ENCODE measurements at regions of chr14 and their contacts with region 1.

Region 1: GRCh38 chr14:61308198-61308597 is 13.2 kb upstream of the PRKCH start:
- DNase-seq: no peak
- H3K4me3 ChIP-seq: no peak overlapping the region
- H3K27ac ChIP-seq: no peak overlapping the region
- H3K4me1 ChIP-seq: no peaks in the 10 kb centered on the region
- H3K27me3 ChIP-seq: peaks cover 2% of the 10 kb centered on the region; the same call in 1 of the 2 replicates

Region 2: GRCh38 chr14:61598980-61599379 is 290.8 kb after region 1 on chr14:
- in situ Hi-C with region 1: no loop called
- DNase-seq: no peak
- H3K4me3 ChIP-seq: no peak overlapping the region
- H3K27ac ChIP-seq: no peak overlapping the region
- H3K4me1 ChIP-seq: peaks cover 43% of the 10 kb centered on the region
- H3K27me3 ChIP-seq: no peaks in the 10 kb centered on the region

Region 3: DNA sequence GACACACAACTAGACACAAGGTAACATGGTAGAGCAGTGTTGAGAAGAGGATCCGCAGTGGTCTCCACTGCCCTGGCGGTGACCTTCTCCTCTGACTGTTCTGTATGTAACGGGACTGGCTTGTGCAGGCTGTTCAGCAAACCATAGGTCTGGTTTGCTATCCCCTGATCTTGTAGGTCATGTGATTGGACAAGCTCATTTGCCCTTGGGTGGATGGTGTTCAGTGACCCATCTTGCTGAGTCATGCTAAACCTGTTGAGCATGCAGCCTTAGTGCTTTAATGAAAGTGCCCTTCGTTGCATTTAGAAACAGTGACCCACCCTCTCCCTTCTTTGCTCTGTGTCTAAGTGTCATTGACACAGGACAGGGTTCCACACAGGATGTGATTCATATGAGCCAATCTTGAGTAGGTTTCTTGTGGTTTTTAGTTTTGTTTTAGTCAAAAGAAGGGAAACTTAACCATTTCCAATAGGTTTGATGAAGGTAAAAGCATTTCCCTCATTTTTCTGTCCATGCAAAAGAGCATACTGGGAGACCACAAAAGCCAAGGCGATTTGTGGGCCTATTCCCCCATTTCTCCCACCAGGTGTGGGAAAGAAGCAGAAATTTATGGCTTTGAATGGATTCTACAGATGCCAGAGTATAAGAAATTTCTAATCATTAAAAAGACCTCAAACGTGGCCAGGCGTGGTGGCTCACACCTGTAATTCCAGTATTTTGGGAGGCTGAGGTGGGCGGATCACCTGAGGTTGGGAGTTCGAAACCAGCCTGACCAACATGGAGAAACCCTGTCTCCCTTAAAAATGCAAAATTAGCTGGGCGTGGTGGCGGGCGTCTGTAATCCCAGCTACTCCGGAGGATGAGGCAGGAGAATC is 354.5 kb after region 1 on chr14:
- in situ Hi-C with region 1: no loop called
- DNase-seq: peak; percentile 77
- H3K4me3 ChIP-seq: peak overlapping the region; percentile 45
- H3K27ac ChIP-seq: peak overlapping the region; percentile 78
- H3K4me1 ChIP-seq: peaks cover 42% of the 10 kb centered on the region
- H3K27me3 ChIP-seq: no peaks in the 10 kb centered on the region

Region 4: DNA sequence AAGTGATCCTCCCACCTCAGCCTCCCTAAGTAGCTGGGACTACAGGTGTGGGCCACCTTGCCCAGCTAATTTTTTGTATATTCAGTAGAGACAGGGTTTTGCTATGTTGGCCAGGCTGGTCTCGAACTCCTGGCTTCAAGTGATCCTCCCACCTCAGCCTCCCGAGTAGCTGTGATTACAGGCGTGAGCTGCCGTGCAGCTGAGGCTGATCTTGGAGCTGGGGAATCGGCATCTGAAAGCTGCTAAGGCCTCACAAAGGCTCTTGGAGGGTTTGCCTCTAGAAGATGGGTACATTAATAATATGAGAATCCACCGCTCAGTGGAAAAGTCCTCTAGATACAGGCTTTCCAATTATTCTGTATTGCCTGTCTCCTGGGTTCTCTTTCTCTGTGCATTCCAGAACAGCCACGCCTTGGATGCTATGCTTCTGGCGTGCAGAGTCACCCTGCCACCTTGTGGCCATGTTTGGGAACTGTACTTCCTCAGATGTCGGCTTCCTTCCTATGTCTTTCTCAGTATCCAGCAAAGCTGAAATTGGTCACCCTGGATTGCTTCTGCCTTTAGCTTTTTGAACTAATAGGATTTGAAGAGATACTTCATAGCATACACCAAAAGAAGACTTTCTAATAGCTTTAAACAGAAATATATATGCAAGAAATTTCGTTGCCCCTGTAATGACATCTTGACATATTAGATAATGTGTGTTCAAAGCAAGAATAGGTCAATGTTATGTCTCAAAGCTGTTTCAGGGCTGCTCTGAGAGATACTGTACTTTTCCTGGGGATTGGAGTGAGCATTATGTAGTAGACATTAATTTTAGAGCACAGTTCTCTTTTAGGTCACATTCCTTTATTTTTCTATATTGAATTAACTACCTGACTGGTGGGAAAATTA is 529.4 kb after region 1 on chr14:
- in situ Hi-C with region 1: loop called (anchors 10 kb)
- DNase-seq: peak; percentile 80
- H3K4me3 ChIP-seq: no peak overlapping the region
- H3K27ac ChIP-seq: no peak overlapping the region
- H3K4me1 ChIP-seq: peaks cover 15% of the 10 kb centered on the region
- H3K27me3 ChIP-seq: no peaks in the 10 kb centered on the region

Measured in GM23248 (cell line).